Naive thymus-derived CD4-positive, alpha-beta T cell (primary cell): ENCODE measurements at regions of chr2 and their contacts with region 1.

Region 1: GRCh38 chr2:2681711-2682251 is 350.7 kb upstream of the MYT1L start:
- DNase-seq: peak in 7 of 9 donors; percentile 22 to 51 (median 31)
- ATAC-seq: peak; percentile 74
- H3K4me3 ChIP-seq: no peak overlapping the region
- H3K4me3 Mint-ChIP-seq: peak overlapping the region in 8 of 10 donors; percentile 44 to 94 (median 78)
- H3K27ac ChIP-seq: no peak overlapping the region
- H3K27ac Mint-ChIP-seq: peak overlapping the region in 7 of 9 donors; percentile 57 to 94 (median 85)
- H3K4me1 ChIP-seq: peaks cover 0 to 48% of the 10 kb centered on the region in 2 donors
- H3K4me1 Mint-ChIP-seq: peaks cover 12 to 54% (median 53%) of the 10 kb centered on the region in 7 donors
- H3K27me3 ChIP-seq: no peaks in the 10 kb centered on the region
- H3K27me3 Mint-ChIP-seq: peaks cover 0 to 10% (median 0%) of the 10 kb centered on the region in 5 donors

Region 2: DNA sequence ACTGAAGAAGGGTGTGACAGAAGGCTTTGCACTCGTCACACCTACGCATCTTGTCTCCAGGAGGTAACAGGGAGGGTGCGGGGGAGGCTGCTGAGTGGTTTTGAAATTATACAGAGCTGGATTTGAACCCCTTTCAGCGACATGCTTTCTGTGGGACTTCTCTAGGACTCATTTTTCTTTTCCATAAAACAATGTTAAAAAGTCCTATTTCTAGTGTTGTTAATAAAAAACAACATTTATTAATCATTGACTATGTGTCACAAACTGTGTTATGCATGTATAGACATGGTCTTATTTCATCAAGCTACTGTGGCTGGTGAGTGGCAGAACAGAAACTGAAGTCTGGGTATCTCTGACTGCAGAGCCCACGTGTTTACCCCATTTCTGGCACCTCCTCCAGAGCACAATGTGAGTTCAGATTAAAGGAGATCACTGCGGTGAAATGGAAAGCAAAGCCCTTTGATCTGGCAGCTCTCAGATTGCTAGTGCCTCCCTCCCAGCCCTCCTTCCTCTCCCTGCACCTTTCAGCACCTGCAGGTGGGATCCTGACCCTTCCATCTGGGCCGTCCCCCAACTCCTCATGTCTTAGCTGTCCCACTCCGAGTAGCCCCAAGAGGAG is 35.2 kb before region 1 on chr2:
- CTCF ChIA-PET with region 1: no interaction called
- POLR2A ChIA-PET with region 1: interaction called, 4 read pairs
- intact Hi-C with region 1: loop called in 1 of 2 experiments (anchors 1 kb)
- DNase-seq: peak in 8 of 9 donors; percentile 42 to 86 (median 80)
- ATAC-seq: peak; percentile 94
- H3K4me3 ChIP-seq: peak overlapping the region; percentile 32
- H3K4me3 Mint-ChIP-seq: peak overlapping the region; percentile 60 to 88 (median 82)
- H3K27ac ChIP-seq: peak overlapping the region; percentile 73
- H3K27ac Mint-ChIP-seq: peak overlapping the region; percentile 60 to 99 (median 96)
- H3K4me1 ChIP-seq: peaks cover 0 to 16% of the 10 kb centered on the region in 2 donors
- H3K4me1 Mint-ChIP-seq: peaks cover 20 to 72% (median 49%) of the 10 kb centered on the region in 7 donors
- H3K27me3 ChIP-seq: no peaks in the 10 kb centered on the region
- H3K27me3 Mint-ChIP-seq: no peaks in the 10 kb centered on the region